ENCODE measurements at regions of chr9 and their contacts with region 1.

Region 1: GRCh38 chr9:92669890-92670708 is at the start of gene IPPK:
- DNase-seq: peak; percentile 98
- H3K4me3 ChIP-seq: peak within 1 kb of the TSS; percentile 50 to 83 (median 77)
- H3K27ac ChIP-seq: peak within 1 kb of the TSS; percentile 97
- H3K4me1 ChIP-seq: peaks cover 16% of the 10 kb centered on the region
- H3K27me3 ChIP-seq: no peaks in the 10 kb centered on the region
- CTCF ChIP-seq: no peak
- POLR2A ChIP-seq: peak; percentile 88
- total RNA-seq, gene IPPK: 12.5 and 14.0 TPM in 2 replicates

Region 2: DNA sequence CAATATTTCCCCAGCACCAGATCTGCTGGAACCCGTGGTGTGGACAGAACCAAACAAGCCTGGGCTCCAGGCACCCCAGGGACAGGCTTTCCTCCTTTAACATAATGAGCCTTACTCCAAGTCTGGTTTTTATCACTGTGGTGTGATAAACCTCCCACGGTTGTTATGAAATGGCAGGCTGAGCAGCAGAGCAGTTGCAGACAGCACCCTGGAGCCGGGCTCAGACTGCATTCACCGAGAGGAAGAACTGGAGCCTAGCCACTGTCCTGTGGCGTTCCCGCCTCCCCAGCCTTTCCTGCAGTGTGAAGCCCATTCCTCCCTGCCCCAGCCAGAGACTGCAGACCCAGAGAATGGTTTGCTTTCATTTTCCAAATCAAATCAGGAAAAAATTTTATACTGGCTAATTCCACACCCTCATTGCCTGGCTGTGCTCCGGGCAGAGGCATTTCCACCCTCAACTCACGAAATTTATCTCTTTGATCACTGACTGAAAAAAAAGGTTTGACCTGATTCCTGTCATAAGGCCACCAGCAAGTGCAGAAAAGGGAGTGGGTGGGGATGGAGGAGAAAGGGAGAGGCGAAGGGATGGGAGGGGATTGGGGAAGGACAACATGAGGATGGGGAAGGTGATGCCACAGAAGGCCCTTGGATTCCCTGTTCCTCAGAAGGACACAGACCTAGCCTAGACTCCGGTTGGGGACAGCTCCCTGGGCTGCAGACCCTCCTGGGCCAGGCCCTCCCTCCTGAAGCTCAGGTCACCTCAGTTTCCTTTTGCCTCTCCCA is 19.1 kb before region 1 on chr9:
- CTCF ChIA-PET with region 1: interaction called, 5 read pairs
- POLR2A ChIA-PET with region 1: no interaction called
- dilution Hi-C with region 1: no loop called
- intact Hi-C with region 1: loop called (anchors 1 kb)
- DNase-seq: no peak
- H3K4me3 ChIP-seq: no peak overlapping the region
- H3K27ac ChIP-seq: no peak overlapping the region
- H3K4me1 ChIP-seq: peaks cover 8% of the 10 kb centered on the region
- H3K27me3 ChIP-seq: no peaks in the 10 kb centered on the region
- CTCF ChIP-seq: no peak
- POLR2A ChIP-seq: no peak

Region 3: GRCh38 chr9:92706216-92706940 is 36.3 kb after region 1 on chr9:
- CTCF ChIA-PET with region 1: interaction called, 3 read pairs
- POLR2A ChIA-PET with region 1: interaction called, 3 read pairs
- dilution Hi-C with region 1: no loop called
- intact Hi-C with region 1: loop called (anchors 1 kb)
- DNase-seq: peak; percentile 13
- H3K4me3 ChIP-seq: no peak overlapping the region
- H3K27ac ChIP-seq: no peak overlapping the region
- H3K4me1 ChIP-seq: peaks cover 12% of the 10 kb centered on the region
- H3K27me3 ChIP-seq: no peaks in the 10 kb centered on the region
- CTCF ChIP-seq: peak; percentile 42 to 52
- POLR2A ChIP-seq: no peak

Region 4: DNA sequence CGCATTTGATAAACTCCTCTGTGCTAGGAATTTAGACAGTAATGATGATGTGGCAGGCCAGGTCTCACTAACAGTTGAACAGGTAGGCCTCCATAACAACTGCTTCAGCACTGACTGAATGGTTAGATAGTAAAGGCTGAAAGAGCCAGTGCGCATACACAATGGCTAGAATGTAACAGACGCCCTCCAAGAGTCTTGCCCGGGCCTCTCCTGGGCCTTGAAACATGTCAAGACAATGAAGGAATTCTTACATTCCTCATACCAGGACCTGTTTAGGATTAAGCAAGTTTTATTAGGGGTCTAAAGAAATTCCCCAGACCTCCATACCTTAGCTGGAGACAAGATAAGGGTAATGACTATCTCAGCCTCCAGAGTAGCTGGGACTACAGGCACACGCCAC is 101.2 kb after region 1 on chr9:
- CTCF ChIA-PET with region 1: no interaction called
- POLR2A ChIA-PET with region 1: no interaction called
- dilution Hi-C with region 1: no loop called
- intact Hi-C with region 1: no loop called
- DNase-seq: no peak
- H3K4me3 ChIP-seq: no peak overlapping the region
- H3K27ac ChIP-seq: no peak overlapping the region
- H3K4me1 ChIP-seq: no peaks in the 10 kb centered on the region
- H3K27me3 ChIP-seq: peaks cover 0 to 3% of the 10 kb centered on the region in 2 experiments
- CTCF ChIP-seq: no peak
- POLR2A ChIP-seq: no peak

Region 5: GRCh38 chr9:92790542-92791527 is 120.7 kb after region 1 on chr9:
- CTCF ChIA-PET with region 1: interaction called, 12 read pairs
- POLR2A ChIA-PET with region 1: no interaction called
- dilution Hi-C with region 1: no loop called
- intact Hi-C with region 1: loop called (anchors 1 kb)
- DNase-seq: peak; percentile 84
- H3K4me3 ChIP-seq: no peak overlapping the region
- H3K27ac ChIP-seq: no peak overlapping the region
- H3K4me1 ChIP-seq: no peaks in the 10 kb centered on the region
- H3K27me3 ChIP-seq: peaks cover 4 to 8% of the 10 kb centered on the region in 2 experiments
- CTCF ChIP-seq: peak; percentile 68 to 73
- POLR2A ChIP-seq: no peak

Region 6: GRCh38 chr9:92877531-92878430 is 207.7 kb after region 1 on chr9 and contains the start of gene ZNF484:
- CTCF ChIA-PET with region 1: no interaction called
- POLR2A ChIA-PET with region 1: no interaction called
- dilution Hi-C with region 1: no loop called
- intact Hi-C with region 1: loop called (anchors 1 kb)
- DNase-seq: peak; percentile 97
- H3K4me3 ChIP-seq: peak within 1 kb of the TSS; percentile 53 to 98 (median 93)
- H3K27ac ChIP-seq: peak within 1 kb of the TSS; percentile 86
- H3K4me1 ChIP-seq: peaks cover 5% of the 10 kb centered on the region
- H3K27me3 ChIP-seq: no peaks in the 10 kb centered on the region
- CTCF ChIP-seq: no peak
- POLR2A ChIP-seq: peak; percentile 62
- total RNA-seq, gene ZNF484: 6.7 and 7.2 TPM in 2 replicates

Measured in endothelial cell of umbilical vein (primary cell).